ENCODE measurements at regions of chr20 and their contacts with region 1.

Region 1: GRCh38 chr20:45771182-45771759 is 20.4 kb downstream of the WFDC3 start:
- DNase-seq: peak; percentile 83
- ATAC-seq: peak; percentile 82
- H3K4me3 Mint-ChIP-seq: no peak overlapping the region
- H3K27ac Mint-ChIP-seq: no peak overlapping the region
- H3K4me1 Mint-ChIP-seq: peaks cover 5% of the 10 kb centered on the region
- H3K27me3 Mint-ChIP-seq: peaks cover 32% of the 10 kb centered on the region

Region 2: DNA sequence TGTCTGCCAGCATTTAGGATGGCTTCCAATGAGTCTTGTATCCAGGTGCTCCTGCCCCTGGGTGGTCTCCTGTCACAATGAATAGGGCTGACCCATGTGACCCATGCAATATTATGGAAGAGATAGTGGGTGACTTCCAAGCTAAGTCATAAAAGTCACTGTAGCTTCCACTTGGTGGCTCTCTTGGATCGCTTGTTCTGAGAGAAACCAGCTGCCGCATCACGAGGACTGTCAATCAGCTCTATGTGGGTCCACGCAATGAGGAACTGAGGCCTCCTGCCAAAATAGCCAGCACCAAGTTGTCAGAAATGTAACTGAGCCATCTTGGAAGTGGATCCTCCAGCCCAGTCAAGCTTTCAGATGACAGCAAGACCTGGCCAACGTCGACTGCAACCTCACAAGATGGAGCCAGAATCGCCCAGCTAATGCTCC is 448.3 kb before region 1 on chr20:
- CTCF ChIA-PET with region 1: interaction called, 44 read pairs
- DNase-seq: no peak
- ATAC-seq: no peak
- H3K4me3 Mint-ChIP-seq: no peak overlapping the region
- H3K27ac Mint-ChIP-seq: no peak overlapping the region
- H3K4me1 Mint-ChIP-seq: peaks cover 35% of the 10 kb centered on the region
- H3K27me3 Mint-ChIP-seq: no peaks in the 10 kb centered on the region

Region 3: GRCh38 chr20:45373353-45374100 is 397.7 kb before region 1 on chr20:
- CTCF ChIA-PET with region 1: interaction called, 15 read pairs
- DNase-seq: peak; percentile 92
- ATAC-seq: peak; percentile 95
- H3K4me3 Mint-ChIP-seq: peak overlapping the region; percentile 78
- H3K27ac Mint-ChIP-seq: peak overlapping the region; percentile 90
- H3K4me1 Mint-ChIP-seq: peaks cover 27% of the 10 kb centered on the region
- H3K27me3 Mint-ChIP-seq: no peaks in the 10 kb centered on the region

Region 4: DNA sequence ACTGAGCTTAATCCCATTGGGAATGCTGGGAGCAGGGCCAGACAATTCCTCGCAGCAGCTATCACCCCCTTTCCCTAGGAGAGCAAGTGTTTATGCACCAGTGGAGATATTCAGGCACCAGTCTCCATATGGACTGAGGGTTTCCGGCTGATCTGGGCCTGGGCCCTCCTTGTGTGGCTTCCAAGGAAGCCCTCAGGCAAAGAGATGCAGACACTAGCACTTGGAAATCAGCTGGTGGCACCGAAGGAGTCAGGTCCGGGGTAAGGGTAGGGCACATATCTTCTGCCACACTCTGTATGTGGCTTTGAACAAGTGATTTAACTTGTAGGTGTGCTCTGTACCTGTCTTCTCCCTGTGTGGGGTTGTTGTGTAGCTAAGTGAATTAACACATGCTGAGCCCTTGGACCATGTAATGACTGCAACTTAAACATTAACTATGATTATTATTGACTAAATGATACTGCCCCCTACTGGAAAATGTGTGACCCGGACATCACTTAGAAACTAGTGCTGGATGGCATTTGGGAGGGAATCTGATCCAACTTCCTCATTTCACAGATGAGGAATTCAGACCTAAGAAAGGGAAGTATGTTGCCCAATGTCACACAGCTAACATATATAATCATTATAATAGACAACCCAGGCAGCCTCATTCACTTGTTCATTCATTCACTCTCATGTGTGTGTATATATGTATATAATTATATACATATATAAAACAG is 321.0 kb before region 1 on chr20:
- CTCF ChIA-PET with region 1: interaction called, 61 read pairs
- DNase-seq: no peak
- ATAC-seq: peak; percentile 34
- H3K4me3 Mint-ChIP-seq: no peak overlapping the region
- H3K27ac Mint-ChIP-seq: no peak overlapping the region
- H3K4me1 Mint-ChIP-seq: peaks cover 15% of the 10 kb centered on the region
- H3K27me3 Mint-ChIP-seq: peaks cover 8% of the 10 kb centered on the region

Region 5: GRCh38 chr20:45592574-45593189 is 178.6 kb before region 1 on chr20:
- CTCF ChIA-PET with region 1: interaction called, 10 read pairs
- DNase-seq: no peak
- ATAC-seq: peak; percentile 58
- H3K4me3 Mint-ChIP-seq: no peak overlapping the region
- H3K27ac Mint-ChIP-seq: no peak overlapping the region
- H3K4me1 Mint-ChIP-seq: no peaks in the 10 kb centered on the region
- H3K27me3 Mint-ChIP-seq: peaks cover 46% of the 10 kb centered on the region

Region 6: GRCh38 chr20:45685896-45686295 is 85.4 kb before region 1 on chr20:
- CTCF ChIA-PET with region 1: no interaction called
- DNase-seq: no peak
- ATAC-seq: no peak
- H3K4me3 Mint-ChIP-seq: no peak overlapping the region
- H3K27ac Mint-ChIP-seq: no peak overlapping the region
- H3K4me1 Mint-ChIP-seq: peaks cover 2% of the 10 kb centered on the region
- H3K27me3 Mint-ChIP-seq: peaks cover 2% of the 10 kb centered on the region

Region 7: DNA sequence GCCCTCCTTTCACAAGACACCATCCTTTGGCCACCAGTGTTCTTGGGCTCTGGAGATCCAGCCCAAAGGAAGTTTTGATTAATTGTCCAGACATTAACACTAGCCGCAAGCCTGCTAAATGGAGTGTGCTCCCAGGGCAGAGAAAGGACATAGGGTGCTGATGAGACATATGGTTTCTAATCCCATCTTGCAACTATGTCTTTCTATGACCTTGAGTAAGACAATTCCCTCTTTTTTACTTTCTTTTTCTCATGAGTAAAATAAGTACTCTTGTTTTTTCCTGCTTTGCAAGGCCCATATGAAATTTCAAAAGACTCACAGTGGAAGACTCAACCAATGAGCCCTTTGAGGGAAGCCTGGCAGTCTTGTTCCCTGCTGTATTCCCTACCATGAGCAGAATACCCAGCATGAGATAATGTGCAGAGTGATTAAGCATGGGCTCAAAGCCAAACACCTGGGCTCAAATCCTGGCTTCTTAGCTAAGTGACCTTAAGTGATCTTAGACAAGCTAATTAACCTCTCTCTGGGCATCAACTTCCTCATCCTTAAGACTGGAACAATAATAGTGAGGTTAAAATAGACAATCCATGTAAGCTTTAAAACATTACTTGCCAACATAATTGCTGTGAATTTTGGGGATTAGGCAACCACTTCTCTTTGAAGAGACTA is 66.2 kb before region 1 on chr20 and contains the start of gene WFDC10B:
- CTCF ChIA-PET with region 1: no interaction called
- DNase-seq: no peak
- ATAC-seq: no peak
- H3K4me3 Mint-ChIP-seq: no peak within 1 kb of the TSS
- H3K27ac Mint-ChIP-seq: no peak within 1 kb of the TSS
- H3K4me1 Mint-ChIP-seq: no peaks in the 10 kb centered on the region
- H3K27me3 Mint-ChIP-seq: peaks cover 30% of the 10 kb centered on the region
- total RNA-seq, gene WFDC10B: not detected

Region 8: GRCh38 chr20:45732199-45732598 is 39.1 kb before region 1 on chr20:
- CTCF ChIA-PET with region 1: no interaction called
- DNase-seq: no peak
- ATAC-seq: no peak
- H3K4me3 Mint-ChIP-seq: no peak overlapping the region
- H3K27ac Mint-ChIP-seq: no peak overlapping the region
- H3K4me1 Mint-ChIP-seq: no peaks in the 10 kb centered on the region
- H3K27me3 Mint-ChIP-seq: peaks cover 35% of the 10 kb centered on the region

Region 9: DNA sequence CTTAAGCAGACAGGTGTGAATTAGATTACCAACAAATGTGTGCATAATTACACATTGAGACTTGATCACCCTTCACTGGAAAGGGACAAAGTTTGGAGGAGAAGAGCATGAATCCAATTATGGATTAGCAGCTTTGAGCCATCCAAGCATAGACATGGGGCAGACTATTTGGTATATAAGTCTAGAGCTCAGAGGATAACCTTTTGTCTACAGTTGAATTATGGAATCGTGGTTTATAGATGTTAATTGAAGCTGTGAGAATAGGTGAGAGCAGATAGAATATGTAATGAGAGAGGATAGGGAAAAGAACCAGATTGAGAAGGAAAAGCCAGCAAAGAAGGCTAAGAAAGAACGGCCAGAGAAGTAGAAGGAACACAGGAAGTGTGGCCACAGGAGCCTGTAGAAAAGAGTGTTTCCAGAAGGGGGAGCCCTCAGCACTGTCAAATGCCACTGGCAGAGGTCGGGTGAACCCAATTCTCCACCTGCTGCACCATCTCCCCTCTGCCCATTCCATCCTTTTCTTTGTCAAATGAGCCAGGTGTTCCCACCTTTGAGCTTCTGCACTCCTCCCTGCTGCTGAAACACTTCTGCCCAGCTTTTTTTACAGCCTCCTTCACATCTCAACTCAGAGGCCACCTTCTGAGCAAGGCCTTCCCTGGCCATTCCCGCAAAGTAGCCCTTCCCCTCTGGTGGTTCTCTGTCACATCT is 27.8 kb after region 1 on chr20:
- CTCF ChIA-PET with region 1: interaction called, 13 read pairs
- DNase-seq: peak; percentile 83
- ATAC-seq: peak; percentile 97
- H3K4me3 Mint-ChIP-seq: no peak overlapping the region
- H3K27ac Mint-ChIP-seq: peak overlapping the region; percentile 65
- H3K4me1 Mint-ChIP-seq: peaks cover 23% of the 10 kb centered on the region
- H3K27me3 Mint-ChIP-seq: no peaks in the 10 kb centered on the region

Region 10: GRCh38 chr20:46004889-46005473 is 233.7 kb after region 1 on chr20:
- CTCF ChIA-PET with region 1: no interaction called
- DNase-seq: peak; percentile 80
- ATAC-seq: peak; percentile 70
- H3K4me3 Mint-ChIP-seq: peak overlapping the region; percentile 43
- H3K27ac Mint-ChIP-seq: peak overlapping the region; percentile 77
- H3K4me1 Mint-ChIP-seq: peaks cover 53% of the 10 kb centered on the region
- H3K27me3 Mint-ChIP-seq: peaks cover 35% of the 10 kb centered on the region

Measured in activated CD8-positive, alpha-beta memory T cell treated with anti-CD3 and anti-CD28 coated beads, Interleukin-2, amount 10 ng/mL, durations not matched to agents 7 days and 5 days (primary cell).